Cardiac septum (tissue), 1 donor: ENCODE measurements at regions of chr11 and their contacts with region 1.

Region 1: DNA sequence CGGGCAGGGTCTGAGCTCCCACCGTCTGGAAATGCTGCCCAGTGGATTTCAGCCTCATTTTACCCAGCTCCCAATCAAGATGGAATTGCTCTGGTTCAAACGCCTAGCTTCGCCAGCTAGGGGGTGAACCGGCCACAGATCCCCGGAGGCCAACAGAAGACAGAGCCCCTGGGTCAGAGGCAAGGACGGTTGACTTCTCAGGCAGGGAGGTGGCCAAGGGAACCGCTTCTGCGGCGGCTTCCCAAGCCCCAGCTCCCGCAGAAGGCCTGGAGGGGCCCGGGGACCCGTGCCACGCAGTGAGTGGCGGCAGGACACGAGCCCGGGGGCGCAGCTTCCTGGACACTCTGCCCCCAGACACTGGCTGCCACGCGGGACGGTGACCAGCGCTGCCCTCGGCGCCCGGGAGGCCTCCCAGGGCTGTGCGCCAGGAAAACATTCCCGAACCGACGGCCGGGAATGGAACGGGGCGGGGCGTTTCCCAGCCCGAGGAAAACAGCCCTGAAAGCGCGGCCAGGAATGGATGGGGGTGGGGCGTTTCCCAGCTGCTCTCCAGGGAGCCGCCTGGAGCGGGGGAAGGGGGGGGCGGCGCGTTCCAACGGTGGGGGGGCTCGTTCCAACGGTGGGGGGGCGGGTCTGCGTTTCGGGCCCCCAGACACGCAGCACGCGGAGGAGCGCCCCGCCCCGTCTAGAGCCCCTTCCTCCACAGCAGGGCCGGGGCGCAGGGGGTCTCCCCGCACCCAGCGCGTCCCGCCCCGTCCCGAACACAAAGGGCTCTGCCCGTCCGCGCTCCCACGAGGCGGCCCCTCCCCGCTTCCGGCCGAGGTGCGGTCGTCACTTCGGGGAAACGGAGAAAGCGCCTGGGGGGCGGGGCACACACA is 13.5 kb upstream of the B4GALNT4 start:
- DNase-seq: peak; percentile 95

Region 2: DNA sequence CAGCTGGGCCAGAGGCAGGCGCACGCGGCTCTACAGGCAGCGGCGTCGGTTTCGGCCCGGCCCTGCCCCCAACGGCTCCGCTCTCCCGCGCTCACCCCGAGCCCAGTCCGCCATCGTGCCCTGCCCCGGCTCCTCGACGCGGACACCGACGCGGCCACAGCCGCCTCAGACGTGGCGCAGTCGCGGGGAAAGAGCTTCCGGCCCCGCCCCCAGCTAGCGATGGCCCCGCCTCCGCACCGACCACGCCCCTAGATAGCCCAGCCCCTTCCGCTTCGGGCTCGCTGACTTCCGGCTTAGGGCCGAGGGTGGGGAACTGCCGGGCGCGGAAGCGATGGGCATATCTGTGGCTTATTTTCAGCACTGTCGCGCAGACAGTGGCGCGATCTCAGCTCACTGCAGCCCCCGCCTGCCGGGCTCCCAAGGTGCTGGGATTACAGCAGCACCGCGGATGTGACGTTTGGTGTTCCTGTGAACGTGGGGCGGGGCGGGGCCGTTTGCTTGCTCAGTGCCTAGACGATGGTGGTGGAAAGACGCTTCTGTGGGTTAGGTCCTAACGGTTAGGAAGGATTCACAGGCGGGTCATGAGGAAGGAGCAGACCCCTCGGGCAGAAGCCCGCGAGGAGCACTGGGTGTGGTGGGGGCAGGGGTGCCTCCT is 148.5 kb before region 1 on chr11 and contains the starts of genes BET1L and RIC8A:
- intact Hi-C with region 1: loop called (anchors 5 kb)
- DNase-seq: peak; percentile 98
- total RNA-seq, gene BET1L: 24.9 TPM
- total RNA-seq, gene RIC8A: 63.4 TPM

Region 3: GRCh38 chr11:304915-305843 is 50.6 kb before region 1 on chr11:
- intact Hi-C with region 1: loop called (anchors 1 kb)
- DNase-seq: no peak

Region 4: DNA sequence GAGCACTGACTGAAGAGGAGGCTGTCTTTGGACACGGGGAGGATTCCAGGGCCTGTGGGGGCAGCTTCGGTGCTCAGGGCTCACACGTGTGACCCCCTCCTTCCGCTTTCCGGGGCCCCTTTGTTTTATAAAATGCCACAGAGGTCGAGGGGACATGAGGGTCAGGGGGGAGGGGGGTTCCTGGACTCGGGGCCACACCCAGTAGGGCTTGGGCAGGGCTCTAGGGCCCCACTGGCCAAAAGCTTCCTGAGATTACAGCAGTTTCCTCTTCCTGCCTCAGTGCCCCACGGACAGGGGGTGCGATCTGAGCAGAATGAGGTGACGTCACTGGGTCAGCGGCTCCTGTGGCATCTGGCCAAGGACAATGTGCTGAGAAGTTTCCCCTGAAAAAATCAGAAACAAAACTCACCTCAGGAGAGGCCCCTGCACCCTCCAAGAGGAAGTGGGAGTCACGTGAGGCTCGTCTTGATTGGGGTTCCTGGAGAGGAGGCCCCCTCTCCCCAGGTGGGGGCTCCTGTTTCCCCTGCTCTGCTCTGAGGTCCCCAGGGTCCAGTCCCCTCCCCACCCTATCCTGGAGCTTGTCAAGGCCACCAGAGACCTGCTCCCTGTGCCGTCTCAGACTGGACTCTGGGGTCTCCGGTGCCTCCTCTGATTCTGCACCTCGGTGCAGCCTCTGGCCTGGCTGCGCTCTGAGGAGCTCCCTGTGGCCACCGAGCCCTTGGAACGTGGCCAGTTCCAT is 28.8 kb before region 1 on chr11:
- intact Hi-C with region 1: loop called (anchors 1 kb)
- DNase-seq: peak; percentile 95

Region 5: DNA sequence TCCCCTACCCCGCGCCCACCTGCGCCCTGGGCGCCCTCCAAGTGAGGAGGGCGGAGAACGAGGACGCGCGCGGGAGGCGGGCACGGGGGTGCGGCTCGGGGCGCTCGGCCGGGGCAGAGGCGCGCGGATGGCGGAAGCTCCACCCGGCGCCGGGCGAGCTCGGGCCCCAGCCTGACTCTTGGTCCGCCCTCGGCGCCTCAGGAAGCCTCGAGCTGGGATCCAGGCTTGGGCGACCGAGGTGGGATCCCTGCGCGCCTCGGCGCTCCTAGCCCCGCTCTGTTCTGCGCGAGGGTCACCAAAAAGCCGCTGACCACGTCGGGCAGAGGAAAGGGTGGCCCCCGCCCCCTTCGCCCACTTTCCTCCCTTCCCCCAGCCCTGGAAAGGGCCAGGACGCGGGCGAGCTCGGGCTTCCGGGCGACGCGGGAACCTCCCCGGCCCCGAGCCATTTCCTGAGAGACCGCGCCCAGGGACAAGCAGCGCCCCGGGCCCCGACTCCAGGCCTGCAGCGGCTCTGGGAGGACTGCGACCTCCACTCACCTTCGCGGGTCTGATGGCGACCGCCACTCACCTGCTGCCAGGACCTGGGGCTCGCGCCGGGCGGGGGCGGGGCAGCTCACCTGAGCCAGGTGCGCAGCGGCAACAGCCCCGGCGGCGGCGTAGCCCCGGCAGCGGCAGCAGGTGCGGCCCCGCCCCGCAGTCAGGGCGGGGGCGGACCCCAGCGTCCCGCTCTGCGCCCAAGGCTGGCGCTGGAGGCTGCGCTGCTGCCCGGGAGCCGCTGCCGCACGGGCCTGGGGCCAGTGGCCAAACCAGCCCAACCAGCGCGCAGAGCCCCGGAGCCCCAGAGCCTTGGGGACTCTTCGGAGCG is 61.2 kb after region 1 on chr11:
- intact Hi-C with region 1: no loop called
- DNase-seq: no peak